Stomach (tissue), 19 donors: ENCODE measurements at regions of chr3 and their contacts with region 1.

Region 1: DNA sequence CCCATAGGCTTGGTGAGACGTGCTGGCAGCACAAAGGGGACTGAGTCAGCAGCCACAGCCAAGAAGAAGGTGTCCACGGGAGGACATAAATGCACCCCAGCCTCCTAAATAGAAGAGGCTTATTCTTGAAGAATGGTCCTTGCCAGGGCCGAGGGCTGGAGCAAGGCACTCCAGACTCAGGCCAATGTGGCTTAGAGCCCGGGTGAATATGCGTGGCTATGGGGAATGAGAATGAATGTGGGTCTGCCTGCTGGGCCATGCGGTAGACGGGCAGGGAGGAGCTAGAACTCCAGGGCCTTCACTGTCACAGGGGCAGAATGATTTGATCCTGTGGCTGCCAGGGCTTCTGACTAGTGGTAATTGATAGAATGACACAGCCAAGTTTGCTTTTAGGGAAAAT is 34.0 kb downstream of the DHX30 start:
- DNase-seq: no peak
- H3K4me3 ChIP-seq: no peak overlapping the region
- H3K27ac ChIP-seq: no peak overlapping the region
- H3K4me1 ChIP-seq: peaks cover 0 to 6% (median 0%) of the 10 kb centered on the region in 4 donors
- H3K27me3 ChIP-seq: no peaks in the 10 kb centered on the region
- CTCF ChIP-seq: no peak
- EP300 ChIP-seq: no peak
- POLR2A ChIP-seq: no peak

Region 2: DNA sequence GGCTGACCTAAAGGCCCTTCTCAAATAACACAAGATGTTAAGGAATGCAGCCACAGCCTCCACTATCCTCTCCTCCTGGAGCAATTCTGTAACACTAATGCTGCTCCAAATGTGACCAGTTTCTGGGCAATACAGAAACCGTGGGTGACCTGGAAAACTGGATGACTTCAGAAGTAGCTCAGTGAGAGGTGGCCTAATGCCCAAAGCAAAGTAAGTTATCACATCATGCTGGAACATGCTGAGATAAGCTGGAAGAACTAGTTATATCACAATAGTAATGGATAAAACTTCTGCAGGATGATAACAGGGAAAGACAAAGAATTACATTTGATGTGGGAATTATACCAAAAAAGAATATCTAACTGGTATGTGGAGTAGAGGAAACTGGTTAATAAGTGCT is 37.9 kb after region 1 on chr3:
- intact Hi-C with region 1: no loop called
- DNase-seq: peak in 1 of 2 donors; percentile 43
- H3K4me3 ChIP-seq: no peak overlapping the region
- H3K27ac ChIP-seq: no peak overlapping the region
- H3K4me1 ChIP-seq: peaks cover 4 to 54% (median 19%) of the 10 kb centered on the region in 4 donors
- H3K27me3 ChIP-seq: no peaks in the 10 kb centered on the region
- CTCF ChIP-seq: no peak
- EP300 ChIP-seq: no peak
- POLR2A ChIP-seq: no peak

Region 3: DNA sequence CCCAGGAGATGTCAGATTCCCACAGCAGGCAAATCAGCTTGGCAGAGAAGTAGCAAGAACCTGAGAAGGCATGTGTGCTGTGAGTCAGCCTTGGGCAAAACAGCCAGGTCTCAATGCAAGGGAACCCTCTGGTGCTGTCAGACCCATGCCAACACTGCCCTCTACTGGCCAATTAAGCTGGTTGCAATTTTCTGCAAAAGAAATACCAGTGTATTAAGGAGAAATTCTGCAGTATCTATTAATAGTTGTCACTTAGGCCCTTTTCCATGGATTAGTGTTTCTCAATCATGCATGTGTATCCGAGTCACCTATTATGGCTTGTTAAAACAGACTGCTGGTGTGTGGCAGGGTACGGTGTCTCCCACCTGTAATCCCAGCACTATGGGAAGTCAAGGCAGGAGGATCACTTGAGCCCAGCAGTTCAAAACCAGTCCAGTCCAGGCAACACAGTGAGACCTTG is 153.0 kb after region 1 on chr3:
- intact Hi-C with region 1: loop called (anchors 5 kb)
- DNase-seq: peak; percentile 79 to 94
- H3K4me3 ChIP-seq: no peak overlapping the region
- H3K27ac ChIP-seq: peak overlapping the region in 1 of 5 donors; percentile 2
- H3K4me1 ChIP-seq: peaks cover 0 to 30% (median 10%) of the 10 kb centered on the region in 4 donors
- H3K27me3 ChIP-seq: no peaks in the 10 kb centered on the region
- CTCF ChIP-seq: peak in 5 of 7 experiments; percentile 55 to 93 (median 87)
- EP300 ChIP-seq: no peak
- POLR2A ChIP-seq: no peak

Region 4: DNA sequence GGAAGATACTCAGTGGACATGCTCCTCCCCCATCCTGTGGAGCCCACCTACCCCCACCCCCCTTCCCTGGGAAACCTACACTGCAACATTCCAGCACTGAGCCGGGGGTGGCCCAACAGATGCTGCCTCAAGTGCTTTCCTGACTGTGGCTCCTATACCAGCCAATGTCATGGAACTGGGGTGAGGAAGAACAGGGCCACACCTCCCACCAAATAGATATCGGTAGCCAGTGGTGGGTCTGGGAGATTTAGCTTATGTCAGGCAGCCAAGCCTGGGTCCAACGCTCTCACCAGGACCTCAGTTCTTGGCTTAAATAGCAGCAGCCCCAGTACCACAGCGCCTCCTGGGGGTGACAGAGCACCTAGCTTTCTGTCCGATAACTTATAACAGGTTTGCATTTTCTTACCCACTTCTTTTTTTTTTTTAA is 321.0 kb after region 1 on chr3:
- intact Hi-C with region 1: loop called (anchors 5 kb)
- DNase-seq: peak; percentile 65 to 81
- H3K4me3 ChIP-seq: no peak overlapping the region
- H3K27ac ChIP-seq: no peak overlapping the region
- H3K4me1 ChIP-seq: peaks cover 0 to 7% (median 0%) of the 10 kb centered on the region in 4 donors
- H3K27me3 ChIP-seq: no peaks in the 10 kb centered on the region
- CTCF ChIP-seq: peak in 4 of 7 experiments; percentile 34 to 60 (median 42)
- EP300 ChIP-seq: no peak
- POLR2A ChIP-seq: no peak